ENCODE measurements at regions of chr4 and their contacts with region 1.

Region 1: DNA sequence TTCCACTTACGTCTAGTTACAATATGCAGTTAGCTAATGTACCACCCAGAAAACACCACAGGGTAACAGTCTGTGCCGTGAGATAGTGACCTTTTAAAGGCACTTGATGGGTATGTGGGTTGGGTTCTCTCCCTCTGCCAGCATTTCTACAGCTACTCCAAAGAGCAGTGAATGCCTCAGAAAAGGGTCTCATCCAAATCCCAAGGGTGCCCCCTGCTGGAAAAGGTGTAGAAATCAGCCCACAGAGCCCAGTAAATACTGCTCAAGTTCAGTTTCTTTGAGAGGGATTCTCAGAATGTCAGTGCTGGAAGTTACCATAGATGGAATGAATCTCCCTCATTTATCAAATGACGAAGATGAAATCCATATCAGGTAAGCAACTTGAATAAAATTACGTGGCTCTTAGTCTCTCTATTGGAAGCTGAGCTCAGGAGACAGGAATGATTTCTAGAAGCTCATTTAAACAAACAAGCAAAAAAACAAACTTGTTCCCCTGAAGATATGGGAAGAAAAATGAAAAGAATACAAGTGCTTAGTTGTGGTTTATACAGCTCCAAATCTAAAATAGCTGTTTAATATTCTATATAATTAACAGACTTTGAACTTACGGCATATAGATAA is 9.5 kb downstream of the RNF175 start:
- DNase-seq: no peak

Region 2: GRCh38 chr4:153432968-153433753 is 317.1 kb before region 1 on chr4:
- intact Hi-C with region 1: loop called (anchors 10 kb)
- DNase-seq: peak; percentile 81

Region 3: GRCh38 chr4:153506341-153507309 is 243.7 kb before region 1 on chr4:
- intact Hi-C with region 1: no loop called
- DNase-seq: no peak

Region 4: DNA sequence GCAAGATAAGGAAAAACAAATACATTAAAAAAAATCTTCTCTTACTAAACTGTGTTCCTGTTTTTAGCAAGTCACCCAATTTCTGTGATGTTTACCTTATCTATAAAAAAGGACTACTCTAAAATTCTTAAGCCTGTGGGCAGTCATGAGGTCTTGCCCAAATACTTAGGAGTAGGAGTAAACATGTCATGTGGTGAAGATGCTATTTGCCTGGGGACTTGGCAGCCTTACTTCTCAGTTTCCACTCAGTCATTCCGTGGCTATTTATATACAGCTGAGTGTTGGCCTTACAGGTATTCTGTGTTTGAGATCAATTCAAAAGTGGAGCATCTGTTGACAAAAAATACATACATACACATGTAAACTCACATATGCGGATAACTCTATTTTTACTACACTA is 156.1 kb before region 1 on chr4:
- intact Hi-C with region 1: no loop called
- DNase-seq: no peak

Region 5: GRCh38 chr4:153634738-153635353 is 115.5 kb before region 1 on chr4:
- intact Hi-C with region 1: loop called (anchors 5 kb)
- DNase-seq: no peak

Measured in cardiac septum (tissue), 1 donor.